Mammary epithelial cell (primary cell): ENCODE measurements at regions of chr12 and their contacts with region 1.

Region 1: GRCh38 chr12:121128970-121129810 is 3.5 kb upstream of the P2RX7 start:
- DNase-seq: no peak
- H3K4me3 ChIP-seq: no peak overlapping the region
- H3K27ac ChIP-seq: no peak overlapping the region
- H3K4me1 ChIP-seq: peaks cover 14% of the 10 kb centered on the region
- H3K27me3 ChIP-seq: no peaks in the 10 kb centered on the region
- CTCF ChIP-seq: no peak

Region 2: GRCh38 chr12:121170611-121171260 is 41.5 kb after region 1 on chr12:
- CTCF ChIA-PET with region 1: no interaction called
- dilution Hi-C with region 1: no loop called
- in situ Hi-C with region 1: no loop called
- intact Hi-C with region 1: loop called (anchors 1 kb)
- DNase-seq: peak; percentile 63
- H3K4me3 ChIP-seq: no peak overlapping the region
- H3K27ac ChIP-seq: no peak overlapping the region
- H3K4me1 ChIP-seq: no peaks in the 10 kb centered on the region
- H3K27me3 ChIP-seq: no peaks in the 10 kb centered on the region
- CTCF ChIP-seq: no peak

Region 3: GRCh38 chr12:121184425-121184824 is 55.2 kb after region 1 on chr12:
- CTCF ChIA-PET with region 1: interaction called, 5 read pairs
- dilution Hi-C with region 1: no loop called
- in situ Hi-C with region 1: no loop called
- intact Hi-C with region 1: loop called (anchors 1 kb)
- DNase-seq: peak; percentile 91
- H3K4me3 ChIP-seq: no peak overlapping the region
- H3K27ac ChIP-seq: no peak overlapping the region
- H3K4me1 ChIP-seq: peaks cover 8% of the 10 kb centered on the region
- H3K27me3 ChIP-seq: no peaks in the 10 kb centered on the region
- CTCF ChIP-seq: peak; percentile 23 to 71

Region 4: GRCh38 chr12:121209624-121210572 is 80.7 kb after region 1 on chr12 and contains the start of gene P2RX4:
- CTCF ChIA-PET with region 1: no interaction called
- dilution Hi-C with region 1: no loop called
- in situ Hi-C with region 1: loop called in 1 of 2 experiments (anchors 10 kb)
- intact Hi-C with region 1: loop called (anchors 1 kb)
- DNase-seq: peak; percentile 68
- H3K4me3 ChIP-seq: peak within 1 kb of the TSS; percentile 49 to 72 (median 58)
- H3K27ac ChIP-seq: peak within 1 kb of the TSS; percentile 47
- H3K4me1 ChIP-seq: peaks cover 13% of the 10 kb centered on the region
- H3K27me3 ChIP-seq: no peaks in the 10 kb centered on the region
- CTCF ChIP-seq: no peak
- total RNA-seq, gene P2RX4: 5.0 to 5.4 TPM